ENCODE measurements at regions of chr10 and their contacts with region 1.

Region 1: DNA sequence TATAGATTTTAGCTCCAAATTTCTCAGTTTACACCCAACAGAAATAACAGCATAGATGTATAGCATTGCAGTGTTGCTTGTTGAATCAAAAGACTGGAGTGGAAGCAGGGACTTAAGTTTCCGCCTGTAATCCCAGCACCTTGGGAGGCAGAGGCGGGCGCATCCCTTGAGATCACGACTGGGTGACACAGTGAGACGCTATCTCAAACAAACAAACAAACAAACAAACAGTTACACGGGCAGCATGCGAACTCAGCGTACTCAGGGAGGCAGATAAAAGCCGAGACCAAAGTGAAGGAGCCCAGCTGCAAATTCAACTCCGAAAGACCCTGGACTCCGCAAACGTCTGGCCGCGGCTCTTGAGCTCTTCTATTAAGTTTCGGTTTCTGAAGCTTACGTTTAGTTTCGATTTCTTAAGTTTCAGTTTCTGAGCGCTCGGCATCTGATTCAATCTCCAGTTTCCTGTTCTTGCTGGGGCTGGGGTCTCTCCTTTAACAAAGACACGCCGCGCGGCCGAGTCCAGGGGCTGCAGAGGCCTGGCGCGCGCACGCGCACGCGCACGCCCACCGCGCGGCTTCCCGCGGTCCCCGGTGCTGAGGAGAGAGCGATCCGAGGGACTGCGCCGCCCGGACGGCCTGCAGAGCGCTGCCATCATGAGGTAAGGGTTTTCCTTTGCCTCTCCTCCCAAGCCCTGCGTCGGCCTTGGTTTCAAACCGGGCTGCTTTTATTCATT is at the start of gene IFIT5:
- DNase-seq: peak; percentile 36 to 86 (median 64)
- ATAC-seq: peak; percentile 74
- H3K4me3 ChIP-seq: peak within 1 kb of the TSS; percentile 89
- H3K4me3 Mint-ChIP-seq: peak within 1 kb of the TSS; percentile 96
- H3K27ac ChIP-seq: peak within 1 kb of the TSS; percentile 86 to 92
- H3K27ac Mint-ChIP-seq: peak within 1 kb of the TSS; percentile 99
- H3K4me1 ChIP-seq: peaks cover 45% of the 10 kb centered on the region
- H3K4me1 Mint-ChIP-seq: peaks cover 72% of the 10 kb centered on the region
- H3K27me3 ChIP-seq: no peaks in the 10 kb centered on the region
- H3K27me3 Mint-ChIP-seq: no peaks in the 10 kb centered on the region
- CTCF ChIP-seq: no peak
- total RNA-seq, gene IFIT5: 25.2 to 25.9 TPM

Region 2: GRCh38 chr10:88990384-88991160 is 423.7 kb before region 1 on chr10 and contains the start of gene FAS:
- CTCF ChIA-PET with region 1: no interaction called
- POLR2A ChIA-PET with region 1: interaction called, 8 read pairs
- intact Hi-C with region 1: loop called in 1 of 2 experiments (anchors 10 kb)
- DNase-seq: peak; percentile 53 to 96 (median 75)
- ATAC-seq: peak; percentile 75
- H3K4me3 ChIP-seq: peak within 1 kb of the TSS; percentile 94
- H3K4me3 Mint-ChIP-seq: peak within 1 kb of the TSS; percentile 98
- H3K27ac ChIP-seq: peak within 1 kb of the TSS; percentile 80 to 89
- H3K27ac Mint-ChIP-seq: peak within 1 kb of the TSS; percentile 93
- H3K4me1 ChIP-seq: peaks cover 30% of the 10 kb centered on the region
- H3K4me1 Mint-ChIP-seq: peaks cover 80% of the 10 kb centered on the region
- H3K27me3 ChIP-seq: no peaks in the 10 kb centered on the region
- H3K27me3 Mint-ChIP-seq: no peaks in the 10 kb centered on the region
- CTCF ChIP-seq: no peak
- total RNA-seq, gene FAS: 23.8 to 28.2 TPM

Region 3: DNA sequence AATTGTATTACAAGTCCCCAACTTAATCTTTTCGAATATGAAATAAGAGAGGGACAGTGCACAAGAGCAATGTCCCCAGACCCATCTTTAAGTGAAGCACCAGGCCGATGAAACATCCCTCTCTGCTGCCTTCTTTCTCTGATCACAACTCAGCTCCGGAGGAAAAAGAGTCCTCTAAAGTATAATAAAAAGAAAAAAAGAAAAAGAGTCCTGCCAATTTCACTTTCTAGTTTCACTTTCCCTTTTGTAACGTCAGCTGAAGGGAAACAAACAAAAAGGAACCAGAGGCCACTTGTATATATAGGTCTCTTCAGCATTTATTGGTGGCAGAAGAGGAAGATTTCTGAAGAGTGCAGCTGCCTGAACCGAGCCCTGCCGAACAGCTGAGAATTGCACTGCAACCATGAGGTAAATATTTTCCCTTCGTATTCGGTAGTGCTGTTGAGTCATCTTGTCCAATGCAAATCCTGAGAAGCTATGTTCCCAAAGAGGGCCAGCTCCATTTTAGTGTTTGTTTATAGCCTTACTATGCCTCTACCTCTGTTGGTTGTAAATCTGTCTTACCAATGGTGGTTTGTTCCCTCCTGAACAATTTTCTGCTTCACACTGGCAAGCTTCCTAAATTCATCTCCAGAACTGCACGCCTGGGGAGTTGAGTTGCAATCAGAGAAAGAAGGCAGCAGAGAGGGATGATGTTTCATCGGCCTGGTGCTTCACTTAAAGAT is 112.4 kb before region 1 on chr10 and contains the start of gene IFIT2:
- CTCF ChIA-PET with region 1: no interaction called
- POLR2A ChIA-PET with region 1: interaction called, 55 read pairs
- intact Hi-C with region 1: loop called (anchors 2 to 5 kb)
- DNase-seq: peak in 10 of 14 experiments; percentile 11 to 84 (median 35)
- ATAC-seq: peak; percentile 78
- H3K4me3 ChIP-seq: peak within 1 kb of the TSS; percentile 68
- H3K4me3 Mint-ChIP-seq: peak within 1 kb of the TSS; percentile 93
- H3K27ac ChIP-seq: peak within 1 kb of the TSS; percentile 78 to 89
- H3K27ac Mint-ChIP-seq: peak within 1 kb of the TSS; percentile 99
- H3K4me1 ChIP-seq: peaks cover 15% of the 10 kb centered on the region
- H3K4me1 Mint-ChIP-seq: peaks cover 58% of the 10 kb centered on the region
- H3K27me3 ChIP-seq: no peaks in the 10 kb centered on the region
- H3K27me3 Mint-ChIP-seq: no peaks in the 10 kb centered on the region
- CTCF ChIP-seq: no peak
- total RNA-seq, gene IFIT2: 36.9 to 38.9 TPM

Region 4: GRCh38 chr10:89337484-89337883 is 76.8 kb before region 1 on chr10:
- CTCF ChIA-PET with region 1: no interaction called
- POLR2A ChIA-PET with region 1: no interaction called
- intact Hi-C with region 1: loop called (anchors 1 to 5 kb)
- DNase-seq: peak in 7 of 14 experiments; percentile 14 to 68 (median 53)
- ATAC-seq: peak; percentile 8
- H3K4me3 ChIP-seq: no peak overlapping the region
- H3K4me3 Mint-ChIP-seq: peak overlapping the region; percentile 35
- H3K27ac ChIP-seq: no peak overlapping the region
- H3K27ac Mint-ChIP-seq: peak overlapping the region; percentile 48
- H3K4me1 ChIP-seq: peaks cover 38% of the 10 kb centered on the region
- H3K4me1 Mint-ChIP-seq: peaks cover 50% of the 10 kb centered on the region
- H3K27me3 ChIP-seq: no peaks in the 10 kb centered on the region
- H3K27me3 Mint-ChIP-seq: no peaks in the 10 kb centered on the region
- CTCF ChIP-seq: no peak

Region 5: DNA sequence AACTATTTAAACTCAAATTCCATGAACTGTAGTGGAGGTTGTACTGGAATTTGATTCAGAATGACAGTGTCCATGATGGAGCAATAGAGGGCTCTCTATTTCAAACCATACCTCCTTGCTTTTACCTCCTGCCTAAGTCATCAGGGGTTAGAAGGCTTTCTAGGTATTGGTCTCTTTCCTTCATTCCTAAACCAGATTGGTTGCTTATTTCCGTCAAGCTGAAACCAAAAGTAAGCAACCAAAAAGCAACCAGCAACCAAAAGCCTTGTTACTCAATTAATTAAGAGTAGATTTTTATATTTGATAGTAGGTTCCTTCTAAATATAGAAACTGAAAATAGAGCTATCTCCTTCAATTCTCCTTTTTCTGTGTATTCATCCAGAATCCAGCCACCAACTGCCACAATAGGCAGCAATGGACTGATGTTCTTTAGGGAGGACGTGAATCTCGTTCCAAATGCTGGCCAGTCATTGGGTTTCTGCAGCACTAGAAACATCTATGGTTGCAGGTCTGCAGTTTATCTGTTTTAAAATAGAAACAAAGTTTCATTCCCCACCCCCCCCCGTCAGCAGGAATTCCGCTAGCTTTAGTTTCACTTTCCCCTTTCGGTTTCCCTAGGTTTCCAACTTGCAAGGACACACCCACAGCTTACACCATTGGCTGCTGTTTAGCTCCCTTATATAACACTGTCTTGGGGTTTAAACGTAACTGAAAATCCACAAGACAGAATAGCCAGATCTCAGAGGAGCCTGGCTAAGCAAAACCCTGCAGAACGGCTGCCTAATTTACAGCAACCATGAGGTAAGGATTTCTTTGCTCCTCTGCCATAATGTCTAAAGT is 22.2 kb before region 1 on chr10 and contains the start of gene IFIT1:
- CTCF ChIA-PET with region 1: interaction called, 3 read pairs
- POLR2A ChIA-PET with region 1: interaction called, 123 read pairs
- intact Hi-C with region 1: loop called (anchors 1 to 2 kb)
- DNase-seq: peak in 12 of 14 experiments; percentile 6 to 92 (median 52)
- ATAC-seq: peak; percentile 94
- H3K4me3 ChIP-seq: peak within 1 kb of the TSS; percentile 60
- H3K4me3 Mint-ChIP-seq: peak within 1 kb of the TSS; percentile 93
- H3K27ac ChIP-seq: peak within 1 kb of the TSS; percentile 58 to 60
- H3K27ac Mint-ChIP-seq: peak within 1 kb of the TSS; percentile 93
- H3K4me1 ChIP-seq: peaks cover 21% of the 10 kb centered on the region
- H3K4me1 Mint-ChIP-seq: peaks cover 47% of the 10 kb centered on the region
- H3K27me3 ChIP-seq: no peaks in the 10 kb centered on the region
- H3K27me3 Mint-ChIP-seq: no peaks in the 10 kb centered on the region
- CTCF ChIP-seq: no peak
- total RNA-seq, gene IFIT1: 5.1 to 6.2 TPM

Region 6: GRCh38 chr10:89701238-89702120 is 287.2 kb after region 1 on chr10 and contains the start of gene KIF20B:
- CTCF ChIA-PET with region 1: no interaction called
- POLR2A ChIA-PET with region 1: interaction called, 28 read pairs
- intact Hi-C with region 1: loop called in 1 of 2 experiments (anchors 5 kb)
- DNase-seq: peak; percentile 90 to 98 (median 93)
- ATAC-seq: peak; percentile 95
- H3K4me3 ChIP-seq: peak within 1 kb of the TSS; percentile 87
- H3K4me3 Mint-ChIP-seq: peak within 1 kb of the TSS; percentile 97
- H3K27ac ChIP-seq: peak within 1 kb of the TSS; percentile 73 to 78
- H3K27ac Mint-ChIP-seq: peak within 1 kb of the TSS; percentile 99
- H3K4me1 ChIP-seq: peaks cover 9% of the 10 kb centered on the region
- H3K4me1 Mint-ChIP-seq: peaks cover 44% of the 10 kb centered on the region
- H3K27me3 ChIP-seq: no peaks in the 10 kb centered on the region
- H3K27me3 Mint-ChIP-seq: no peaks in the 10 kb centered on the region
- CTCF ChIP-seq: peak; percentile 24
- total RNA-seq, gene KIF20B: 17.1 to 18.4 TPM